ENCODE measurements at regions of chr17 and their contacts with region 1.

Region 1: GRCh38 chr17:17681187-17681848 is at the start of gene RAI1:
- DNase-seq: peak; percentile 84
- ATAC-seq: peak; percentile 63
- H3K4me3 Mint-ChIP-seq: peak within 1 kb of the TSS; percentile 91
- H3K27ac Mint-ChIP-seq: peak within 1 kb of the TSS; percentile 81
- H3K4me1 Mint-ChIP-seq: peaks cover 24% of the 10 kb centered on the region
- H3K27me3 Mint-ChIP-seq: no peaks in the 10 kb centered on the region
- CTCF ChIP-seq: no peak
- total RNA-seq, gene RAI1: 26.7 and 31.2 TPM in 2 replicates

Region 2: GRCh38 chr17:17694169-17695081 is 13.1 kb after region 1 on chr17:
- CTCF ChIA-PET with region 1: interaction called, 6 read pairs
- POLR2A ChIA-PET with region 1: interaction called, 84 read pairs
- intact Hi-C with region 1: loop called (anchors 1 kb)
- DNase-seq: peak; percentile 81
- ATAC-seq: peak; percentile 70
- H3K4me3 Mint-ChIP-seq: peak overlapping the region; percentile 86
- H3K27ac Mint-ChIP-seq: peak overlapping the region; percentile 96
- H3K4me1 Mint-ChIP-seq: peaks cover 54% of the 10 kb centered on the region
- H3K27me3 Mint-ChIP-seq: no peaks in the 10 kb centered on the region
- CTCF ChIP-seq: no peak

Region 3: DNA sequence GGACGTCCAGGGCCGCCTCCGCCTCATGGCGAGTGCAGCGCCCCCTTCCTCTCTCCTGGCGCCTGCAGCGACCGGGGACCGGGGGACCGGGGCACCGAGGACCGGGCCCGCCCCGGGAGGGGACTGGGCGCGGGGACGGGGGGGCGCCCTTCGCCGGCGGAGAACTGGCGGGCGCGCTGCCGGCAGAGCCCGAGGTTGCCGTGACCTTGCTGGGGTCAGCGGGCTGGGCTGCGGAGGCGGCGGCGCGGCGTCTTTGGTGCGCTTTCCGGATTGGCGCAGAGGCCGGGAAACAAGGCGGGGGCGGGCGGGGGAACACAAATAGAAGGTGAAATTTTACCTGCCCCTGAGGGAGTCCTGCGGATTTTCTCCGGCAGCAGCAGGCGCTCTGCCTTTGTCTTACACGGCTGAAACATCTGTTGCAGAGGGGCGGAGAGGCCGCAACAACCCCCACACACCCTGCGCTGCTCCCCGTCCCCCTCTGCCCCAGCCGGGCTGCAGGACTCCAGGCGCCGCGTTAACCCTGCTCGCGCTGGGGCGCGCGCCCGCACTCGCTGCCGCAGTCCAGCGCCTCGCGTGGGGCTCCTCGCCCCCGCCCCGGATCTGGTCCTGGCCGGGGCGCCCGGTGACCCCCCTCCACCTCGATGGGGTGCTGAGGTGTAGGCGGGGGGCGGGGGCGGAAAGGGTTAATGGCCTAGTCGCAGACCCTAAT is 102.0 kb after region 1 on chr17:
- CTCF ChIA-PET with region 1: interaction called, 5 read pairs
- POLR2A ChIA-PET with region 1: interaction called, 3 read pairs
- intact Hi-C with region 1: loop called (anchors 2 kb)
- DNase-seq: peak; percentile 32
- ATAC-seq: peak; percentile 32
- H3K4me3 Mint-ChIP-seq: peak overlapping the region; percentile 88
- H3K27ac Mint-ChIP-seq: no peak overlapping the region
- H3K4me1 Mint-ChIP-seq: peaks cover 27% of the 10 kb centered on the region
- H3K27me3 Mint-ChIP-seq: peaks cover 2% of the 10 kb centered on the region
- CTCF ChIP-seq: no peak

Region 4: DNA sequence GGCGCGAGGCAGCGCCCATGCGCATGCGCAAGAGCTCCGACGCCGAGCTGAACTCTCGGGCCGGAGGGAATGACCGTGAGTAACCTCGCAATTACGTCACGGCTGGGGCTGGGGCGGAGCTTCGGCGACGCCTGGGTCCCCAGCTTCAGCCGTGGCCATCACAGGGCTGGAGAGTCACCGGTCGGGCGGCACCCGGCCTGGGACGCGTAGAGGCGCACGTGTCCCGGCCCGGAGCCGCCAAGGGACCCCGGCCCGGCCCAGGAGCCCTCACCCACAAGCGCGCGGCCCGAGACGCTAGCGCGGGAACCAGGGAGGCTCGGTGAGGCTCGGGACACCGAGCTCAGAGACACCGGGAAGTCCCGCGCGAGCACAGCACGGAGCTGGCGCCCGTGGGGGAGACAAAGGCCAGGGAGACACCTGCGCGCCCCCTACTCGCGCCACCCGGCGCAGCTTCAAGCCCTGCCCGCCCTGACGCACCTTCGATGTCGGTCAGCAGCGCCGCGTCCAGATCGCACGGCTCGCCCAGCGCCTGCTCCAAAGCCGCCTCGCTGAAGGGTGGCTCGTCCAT is 155.0 kb after region 1 on chr17:
- CTCF ChIA-PET with region 1: no interaction called
- POLR2A ChIA-PET with region 1: interaction called, 28 read pairs
- intact Hi-C with region 1: no loop called
- DNase-seq: peak; percentile 93
- ATAC-seq: peak; percentile 59
- H3K4me3 Mint-ChIP-seq: peak overlapping the region; percentile 86
- H3K27ac Mint-ChIP-seq: peak overlapping the region; percentile 66
- H3K4me1 Mint-ChIP-seq: peaks cover 70% of the 10 kb centered on the region
- H3K27me3 Mint-ChIP-seq: no peaks in the 10 kb centered on the region
- CTCF ChIP-seq: no peak

Region 5: DNA sequence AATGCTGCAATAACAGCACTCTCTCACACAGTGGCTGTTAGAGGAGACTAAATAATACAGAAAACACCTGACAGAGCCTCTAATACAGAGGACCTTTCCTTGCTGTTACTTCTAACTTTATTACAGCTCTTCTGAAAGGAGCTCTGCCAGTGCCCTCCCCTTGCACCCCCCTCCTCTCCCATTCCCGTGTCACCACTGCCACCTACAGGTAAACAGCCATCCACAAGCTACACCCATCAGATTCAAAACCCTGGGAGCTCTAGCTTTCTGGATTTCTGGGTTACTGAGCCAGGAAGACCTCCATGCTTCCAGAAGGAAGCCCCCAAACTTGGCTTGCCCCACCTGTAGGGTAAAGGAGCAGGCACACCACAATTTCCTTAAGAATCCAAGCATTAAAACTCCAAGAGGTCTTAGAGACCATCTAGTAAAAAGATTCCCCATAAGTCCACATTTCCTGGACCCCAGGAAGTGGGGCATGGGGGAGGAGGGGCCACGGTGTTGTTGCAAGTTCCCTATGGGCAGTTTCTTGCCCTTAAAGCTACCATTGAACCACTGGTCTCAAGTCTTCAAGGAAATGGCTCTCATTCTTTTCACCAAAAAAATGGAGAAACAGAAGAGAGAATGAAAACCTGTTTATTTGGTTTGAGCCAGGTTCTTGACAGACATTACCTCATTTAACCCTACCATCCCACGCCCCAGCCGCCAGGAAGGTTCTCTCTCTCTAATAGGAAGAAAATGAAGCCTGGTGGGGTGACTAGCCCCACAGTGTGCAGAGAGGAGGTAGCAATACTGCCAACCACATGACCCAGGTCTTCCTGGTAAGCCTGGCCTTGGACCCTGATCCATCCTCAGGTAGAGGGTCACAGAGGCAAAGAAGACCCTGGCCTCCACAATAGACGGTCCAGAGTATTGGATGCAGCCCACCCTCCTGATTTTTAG is 238.1 kb after region 1 on chr17:
- CTCF ChIA-PET with region 1: interaction called, 10 read pairs
- POLR2A ChIA-PET with region 1: interaction called, 4 read pairs
- intact Hi-C with region 1: loop called (anchors 1 kb)
- DNase-seq: peak; percentile 29
- ATAC-seq: peak; percentile 84
- H3K4me3 Mint-ChIP-seq: no peak overlapping the region
- H3K27ac Mint-ChIP-seq: no peak overlapping the region
- H3K4me1 Mint-ChIP-seq: no peaks in the 10 kb centered on the region
- H3K27me3 Mint-ChIP-seq: no peaks in the 10 kb centered on the region
- CTCF ChIP-seq: no peak

Region 6: GRCh38 chr17:17935321-17936271 is 254.3 kb after region 1 on chr17:
- CTCF ChIA-PET with region 1: no interaction called
- POLR2A ChIA-PET with region 1: no interaction called
- intact Hi-C with region 1: no loop called
- DNase-seq: no peak
- ATAC-seq: no peak
- H3K4me3 Mint-ChIP-seq: no peak overlapping the region
- H3K27ac Mint-ChIP-seq: no peak overlapping the region
- H3K4me1 Mint-ChIP-seq: peaks cover 8% of the 10 kb centered on the region
- H3K27me3 Mint-ChIP-seq: no peaks in the 10 kb centered on the region
- CTCF ChIP-seq: no peak

Region 7: DNA sequence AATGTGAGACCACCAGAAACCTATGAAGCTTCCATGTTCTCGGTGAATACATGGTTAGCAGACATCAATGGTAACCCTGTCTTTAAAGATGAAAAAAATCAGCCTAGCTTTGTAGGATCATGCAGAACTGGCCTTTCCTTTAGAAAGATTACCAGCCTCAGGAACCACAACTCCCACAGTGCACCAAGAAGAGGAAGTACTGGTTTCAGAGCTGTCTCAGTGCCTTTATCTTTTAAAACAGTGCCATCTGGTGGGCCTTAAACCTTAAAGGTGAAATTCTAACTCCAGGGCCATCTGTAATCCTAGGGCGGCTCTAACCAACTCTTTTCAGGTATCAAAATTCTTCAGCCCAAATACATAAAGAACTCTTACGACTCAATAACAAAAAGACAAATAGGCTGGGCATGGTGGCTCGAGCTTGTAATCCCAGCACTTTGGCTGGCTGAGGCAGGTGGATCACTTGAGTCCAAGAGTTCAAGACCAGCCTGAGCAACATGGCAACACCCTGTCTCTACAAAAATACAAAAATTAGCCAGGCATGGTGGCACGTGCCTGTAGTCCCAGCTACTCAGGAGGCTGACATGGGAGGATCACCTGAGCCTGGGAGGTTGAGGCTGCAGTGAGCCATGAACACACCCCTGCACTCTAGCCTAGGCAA is 352.3 kb after region 1 on chr17:
- CTCF ChIA-PET with region 1: interaction called, 6 read pairs
- POLR2A ChIA-PET with region 1: interaction called, 9 read pairs
- intact Hi-C with region 1: loop called (anchors 1 kb)
- DNase-seq: no peak
- ATAC-seq: peak; percentile 79
- H3K4me3 Mint-ChIP-seq: no peak overlapping the region
- H3K27ac Mint-ChIP-seq: peak overlapping the region; percentile 61
- H3K4me1 Mint-ChIP-seq: peaks cover 50% of the 10 kb centered on the region
- H3K27me3 Mint-ChIP-seq: no peaks in the 10 kb centered on the region
- CTCF ChIP-seq: peak; percentile 54

Region 8: GRCh38 chr17:18117982-18118975 is 437.0 kb after region 1 on chr17:
- CTCF ChIA-PET with region 1: no interaction called
- POLR2A ChIA-PET with region 1: no interaction called
- intact Hi-C with region 1: no loop called
- DNase-seq: no peak
- ATAC-seq: no peak
- H3K4me3 Mint-ChIP-seq: no peak overlapping the region
- H3K27ac Mint-ChIP-seq: no peak overlapping the region
- H3K4me1 Mint-ChIP-seq: no peaks in the 10 kb centered on the region
- H3K27me3 Mint-ChIP-seq: no peaks in the 10 kb centered on the region
- CTCF ChIP-seq: no peak